Heart left ventricle (tissue), 16 donors: ENCODE measurements at regions of chr15 and their contacts with region 1.

Region 1: GRCh38 chr15:57861036-57861638 is 154.6 kb downstream of the POLR2M start:
- DNase-seq: peak in 2 of 5 donors; percentile 29 to 38
- ATAC-seq: peak in 2 of 4 donors; percentile 14 to 41
- H3K4me3 ChIP-seq: no peak overlapping the region
- H3K27ac ChIP-seq: no peak overlapping the region
- H3K4me1 ChIP-seq: peaks cover 0 to 9% (median 0%) of the 10 kb centered on the region in 12 donors
- H3K27me3 ChIP-seq: no peaks in the 10 kb centered on the region
- CTCF ChIP-seq: peak; percentile 72 to 92 (median 84)
- POLR2A ChIP-seq: no peak

Region 2: GRCh38 chr15:57635300-57635909 is 225.7 kb before region 1 on chr15:
- intact Hi-C with region 1: no loop called
- DNase-seq: peak in 4 of 5 donors; percentile 53 to 77 (median 59)
- ATAC-seq: peak; percentile 79 to 87 (median 84)
- H3K4me3 ChIP-seq: no peak overlapping the region
- H3K27ac ChIP-seq: peak overlapping the region; percentile 67 to 92 (median 80)
- H3K4me1 ChIP-seq: peaks cover 0 to 81% (median 45%) of the 10 kb centered on the region in 12 donors
- H3K27me3 ChIP-seq: no peaks in the 10 kb centered on the region
- CTCF ChIP-seq: peak in 6 of 12 donors; percentile 2 to 33 (median 26)
- POLR2A ChIP-seq: no peak

Region 3: GRCh38 chr15:57667171-57667849 is 193.8 kb before region 1 on chr15:
- intact Hi-C with region 1: loop called in 9 of 10 experiments (anchors 1 to 10 kb)
- DNase-seq: no peak
- ATAC-seq: peak; percentile 45 to 68 (median 56)
- H3K4me3 ChIP-seq: no peak overlapping the region
- H3K27ac ChIP-seq: peak overlapping the region in 4 of 12 donors; percentile 20 to 53 (median 31)
- H3K4me1 ChIP-seq: peaks cover 0 to 37% (median 13%) of the 10 kb centered on the region in 12 donors
- H3K27me3 ChIP-seq: no peaks in the 10 kb centered on the region
- CTCF ChIP-seq: peak; percentile 8 to 66 (median 48)
- POLR2A ChIP-seq: no peak

Region 4: GRCh38 chr15:57732526-57733331 is 128.4 kb before region 1 on chr15:
- intact Hi-C with region 1: loop called in 3 of 10 experiments (anchors 5 kb)
- DNase-seq: peak in 3 of 5 donors; percentile 35 to 52 (median 37)
- ATAC-seq: peak in 2 of 4 donors; percentile 58 to 69
- H3K4me3 ChIP-seq: no peak overlapping the region
- H3K27ac ChIP-seq: no peak overlapping the region
- H3K4me1 ChIP-seq: peaks cover 0 to 10% (median 4%) of the 10 kb centered on the region in 12 donors
- H3K27me3 ChIP-seq: no peaks in the 10 kb centered on the region
- CTCF ChIP-seq: peak; percentile 80 to 93 (median 88)
- POLR2A ChIP-seq: no peak

Region 5: GRCh38 chr15:57751177-57751800 is 109.8 kb before region 1 on chr15:
- intact Hi-C with region 1: loop called (anchors 2 to 5 kb)
- DNase-seq: no peak
- ATAC-seq: peak in 3 of 4 donors; percentile 47 to 64 (median 58)
- H3K4me3 ChIP-seq: no peak overlapping the region
- H3K27ac ChIP-seq: no peak overlapping the region
- H3K4me1 ChIP-seq: peaks cover 0 to 15% (median 0%) of the 10 kb centered on the region in 12 donors
- H3K27me3 ChIP-seq: no peaks in the 10 kb centered on the region
- CTCF ChIP-seq: peak; percentile 18 to 75 (median 62)
- POLR2A ChIP-seq: no peak

Region 6: DNA sequence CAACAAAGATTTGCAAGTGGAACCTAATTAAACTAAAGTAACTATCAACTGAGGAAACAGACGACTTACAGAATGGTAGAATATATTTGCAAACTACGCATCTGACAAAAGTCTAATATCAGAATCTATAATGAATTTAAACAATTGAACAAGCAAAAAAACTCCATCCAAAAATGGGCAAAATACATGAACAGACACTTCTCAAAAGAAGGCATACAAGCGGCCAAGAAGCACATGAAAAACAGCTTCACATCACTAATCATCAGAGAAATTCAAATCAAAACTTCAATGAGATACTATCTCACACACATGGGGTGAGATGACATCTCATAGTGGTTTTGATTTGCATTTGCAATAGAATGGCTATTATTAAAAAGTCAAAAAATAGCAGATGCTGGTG is 26.0 kb before region 1 on chr15:
- intact Hi-C with region 1: no loop called
- DNase-seq: no peak
- ATAC-seq: no peak
- H3K4me3 ChIP-seq: no peak overlapping the region
- H3K27ac ChIP-seq: no peak overlapping the region
- H3K4me1 ChIP-seq: no peaks in the 10 kb centered on the region
- H3K27me3 ChIP-seq: no peaks in the 10 kb centered on the region
- CTCF ChIP-seq: no peak
- POLR2A ChIP-seq: no peak

Region 7: GRCh38 chr15:57923306-57923705 is 62.2 kb after region 1 on chr15:
- intact Hi-C with region 1: loop called in 2 of 10 experiments (anchors 5 kb)
- DNase-seq: peak in 2 of 5 donors; percentile 48 to 69
- ATAC-seq: peak; percentile 78 to 86 (median 82)
- H3K4me3 ChIP-seq: peak overlapping the region in 3 of 12 donors; percentile 0 to 14 (median 5)
- H3K27ac ChIP-seq: peak overlapping the region; percentile 56 to 86 (median 73)
- H3K4me1 ChIP-seq: peaks cover 3 to 55% (median 42%) of the 10 kb centered on the region in 12 donors
- H3K27me3 ChIP-seq: no peaks in the 10 kb centered on the region
- CTCF ChIP-seq: no peak
- POLR2A ChIP-seq: no peak